ENCODE measurements at regions of chr17 and their contacts with region 1.

Region 1: DNA sequence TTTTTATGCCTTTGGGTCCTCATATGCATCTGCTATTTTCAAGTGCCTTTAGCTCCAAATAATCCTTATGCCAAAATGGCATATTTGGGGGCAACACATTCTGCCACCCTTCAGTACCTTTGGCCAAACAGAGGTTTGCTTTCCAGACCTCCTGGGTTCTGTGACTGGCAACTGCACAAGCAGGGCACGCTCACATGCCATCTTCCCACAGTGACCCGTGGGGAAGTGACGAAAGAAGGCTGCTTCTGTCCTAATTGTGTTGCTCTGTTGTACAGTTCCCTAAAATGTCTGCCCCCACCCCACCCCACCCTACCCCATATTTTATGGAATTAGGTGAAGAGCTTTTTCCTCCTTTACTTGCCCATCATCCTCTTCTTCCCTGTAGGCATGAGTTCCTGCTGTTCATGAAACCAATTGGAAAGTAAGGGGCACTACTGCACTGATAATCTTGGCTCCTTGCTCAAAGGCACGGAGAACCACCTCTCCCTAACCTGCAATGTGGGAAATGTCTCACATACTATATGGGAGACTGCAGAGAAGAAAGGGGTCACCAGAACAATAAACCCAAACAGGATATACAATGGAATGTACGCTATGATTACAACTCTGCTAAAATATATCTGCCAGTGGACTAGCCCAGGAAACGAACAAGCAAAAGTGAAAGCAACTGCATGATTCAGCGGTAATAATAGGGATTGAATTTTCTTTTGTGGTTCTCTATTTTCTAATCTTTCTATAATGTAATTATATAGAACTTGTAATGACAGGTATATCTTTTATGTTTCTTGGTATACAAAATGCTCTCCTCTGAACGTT is 3.3 kb upstream of the SLFN12L start:
- DNase-seq: peak in 4 of 5 donors; percentile 43 to 54 (median 50)
- H3K4me3 ChIP-seq: peak overlapping the region; percentile 60 to 79
- H3K4me3 Mint-ChIP-seq: peak overlapping the region; percentile 87 to 98 (median 92)
- H3K27ac ChIP-seq: peak overlapping the region; percentile 74
- H3K27ac Mint-ChIP-seq: peak overlapping the region; percentile 80 to 98 (median 95)
- H3K4me1 ChIP-seq: peaks cover 45% of the 10 kb centered on the region
- H3K4me1 Mint-ChIP-seq: peaks cover 32 to 62% (median 45%) of the 10 kb centered on the region in 4 donors
- H3K27me3 ChIP-seq: no peaks in the 10 kb centered on the region
- H3K27me3 Mint-ChIP-seq: no peaks in the 10 kb centered on the region

Region 2: GRCh38 chr17:35176897-35177296 is 363.9 kb before region 1 on chr17:
- CTCF ChIA-PET with region 1: interaction called, 5 read pairs
- POLR2A ChIA-PET with region 1: interaction called, 12 read pairs
- intact Hi-C with region 1: no loop called
- DNase-seq: no peak
- H3K4me3 ChIP-seq: no peak overlapping the region
- H3K4me3 Mint-ChIP-seq: peak overlapping the region in 6 of 8 donors; percentile 32 to 84 (median 81)
- H3K27ac ChIP-seq: no peak overlapping the region
- H3K27ac Mint-ChIP-seq: peak overlapping the region; percentile 90 to 99 (median 93)
- H3K4me1 ChIP-seq: peaks cover 61% of the 10 kb centered on the region
- H3K4me1 Mint-ChIP-seq: peaks cover 49 to 77% (median 63%) of the 10 kb centered on the region in 4 donors
- H3K27me3 ChIP-seq: no peaks in the 10 kb centered on the region
- H3K27me3 Mint-ChIP-seq: no peaks in the 10 kb centered on the region

Region 3: GRCh38 chr17:35432176-35433074 is 108.4 kb before region 1 on chr17 and contains the start of gene SLFN12:
- CTCF ChIA-PET with region 1: interaction called, 8 read pairs
- POLR2A ChIA-PET with region 1: interaction called, 12 read pairs
- intact Hi-C with region 1: no loop called
- DNase-seq: peak; percentile 67 to 74 (median 72)
- H3K4me3 ChIP-seq: peak within 1 kb of the TSS; percentile 79 to 83
- H3K4me3 Mint-ChIP-seq: peak within 1 kb of the TSS; percentile 93 to 100 (median 97)
- H3K27ac ChIP-seq: peak within 1 kb of the TSS; percentile 61
- H3K27ac Mint-ChIP-seq: peak within 1 kb of the TSS; percentile 88 to 97 (median 94)
- H3K4me1 ChIP-seq: peaks cover 44% of the 10 kb centered on the region
- H3K4me1 Mint-ChIP-seq: peaks cover 32 to 68% (median 48%) of the 10 kb centered on the region in 4 donors
- H3K27me3 ChIP-seq: no peaks in the 10 kb centered on the region
- H3K27me3 Mint-ChIP-seq: no peaks in the 10 kb centered on the region
- total RNA-seq, gene SLFN12: 6.5 to 8.9 TPM

Region 4: GRCh38 chr17:35519439-35519838 is 21.4 kb before region 1 on chr17:
- CTCF ChIA-PET with region 1: interaction called, 107 read pairs
- POLR2A ChIA-PET with region 1: interaction called, 208 read pairs
- intact Hi-C with region 1: loop called (anchors 2 kb)
- DNase-seq: peak in 1 of 5 donors; percentile 57
- H3K4me3 ChIP-seq: peak overlapping the region in 1 of 2 donors; percentile 23
- H3K4me3 Mint-ChIP-seq: peak overlapping the region; percentile 17 to 83 (median 68)
- H3K27ac ChIP-seq: peak overlapping the region; percentile 0
- H3K27ac Mint-ChIP-seq: peak overlapping the region; percentile 27 to 91 (median 72)
- H3K4me1 ChIP-seq: peaks cover 74% of the 10 kb centered on the region
- H3K4me1 Mint-ChIP-seq: peaks cover 71 to 98% (median 86%) of the 10 kb centered on the region in 4 donors
- H3K27me3 ChIP-seq: no peaks in the 10 kb centered on the region
- H3K27me3 Mint-ChIP-seq: no peaks in the 10 kb centered on the region

Region 5: DNA sequence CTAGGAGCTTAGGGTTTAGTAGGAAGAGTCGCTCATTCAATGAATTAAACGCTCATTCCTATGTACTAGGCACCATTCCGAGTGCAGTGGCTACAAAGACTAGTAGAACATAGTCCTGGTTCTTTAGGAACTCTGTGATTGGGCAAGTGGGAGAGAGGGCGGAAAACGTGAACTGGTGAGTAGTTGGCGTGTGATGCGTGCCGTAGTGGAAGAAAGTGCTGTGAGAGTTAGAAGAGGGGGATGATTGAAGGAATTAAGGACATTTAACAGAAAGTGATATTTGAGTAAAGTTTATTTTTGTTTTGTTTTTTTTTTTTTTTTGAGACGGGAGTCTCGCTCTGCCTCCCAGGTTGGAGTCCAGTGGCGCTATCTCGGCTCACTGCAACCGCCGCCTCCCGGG is 27.7 kb after region 1 on chr17:
- CTCF ChIA-PET with region 1: interaction called, 4 read pairs
- POLR2A ChIA-PET with region 1: interaction called, 10 read pairs
- intact Hi-C with region 1: no loop called
- DNase-seq: peak in 4 of 5 donors; percentile 12 to 63 (median 18)
- H3K4me3 ChIP-seq: peak overlapping the region; percentile 89 to 91
- H3K4me3 Mint-ChIP-seq: peak overlapping the region; percentile 81 to 98 (median 94)
- H3K27ac ChIP-seq: peak overlapping the region; percentile 76
- H3K27ac Mint-ChIP-seq: peak overlapping the region; percentile 85 to 99 (median 96)
- H3K4me1 ChIP-seq: peaks cover 24% of the 10 kb centered on the region
- H3K4me1 Mint-ChIP-seq: peaks cover 18 to 42% (median 28%) of the 10 kb centered on the region in 4 donors
- H3K27me3 ChIP-seq: no peaks in the 10 kb centered on the region
- H3K27me3 Mint-ChIP-seq: peaks cover 0 to 2% of the 10 kb centered on the region in 2 donors

Region 6: GRCh38 chr17:35695613-35696012 is 154.8 kb after region 1 on chr17:
- CTCF ChIA-PET with region 1: no interaction called
- POLR2A ChIA-PET with region 1: no interaction called
- intact Hi-C with region 1: no loop called
- DNase-seq: no peak
- H3K4me3 ChIP-seq: no peak overlapping the region
- H3K4me3 Mint-ChIP-seq: no peak overlapping the region
- H3K27ac ChIP-seq: no peak overlapping the region
- H3K27ac Mint-ChIP-seq: no peak overlapping the region
- H3K4me1 ChIP-seq: no peaks in the 10 kb centered on the region
- H3K4me1 Mint-ChIP-seq: peaks cover 0 to 2% (median 0%) of the 10 kb centered on the region in 4 donors
- H3K27me3 ChIP-seq: no peaks in the 10 kb centered on the region
- H3K27me3 Mint-ChIP-seq: no peaks in the 10 kb centered on the region

Region 7: GRCh38 chr17:36148559-36149295 is 607.9 kb after region 1 on chr17:
- CTCF ChIA-PET with region 1: no interaction called
- POLR2A ChIA-PET with region 1: no interaction called
- intact Hi-C with region 1: no loop called
- DNase-seq: peak; percentile 44 to 66 (median 57)
- H3K4me3 ChIP-seq: no peak overlapping the region
- H3K4me3 Mint-ChIP-seq: peak overlapping the region in 1 of 8 donors; percentile 64
- H3K27ac ChIP-seq: no peak overlapping the region
- H3K27ac Mint-ChIP-seq: no peak overlapping the region
- H3K4me1 ChIP-seq: no peaks in the 10 kb centered on the region
- H3K4me1 Mint-ChIP-seq: peaks cover 0 to 3% (median under 1%) of the 10 kb centered on the region in 4 donors
- H3K27me3 ChIP-seq: no peaks in the 10 kb centered on the region
- H3K27me3 Mint-ChIP-seq: peaks cover 9 to 26% of the 10 kb centered on the region in 2 donors